Gastrocnemius medialis (tissue), 4 donors: ENCODE measurements at regions of chr3 and their contacts with region 1.

Region 1: GRCh38 chr3:179695672-179696313 is 43.0 kb downstream of the USP13 start:
- DNase-seq: no peak
- ATAC-seq: no peak
- H3K4me3 ChIP-seq: no peak overlapping the region
- H3K27ac ChIP-seq: peak overlapping the region; percentile 51 to 86 (median 70)
- H3K4me1 ChIP-seq: peaks cover 31 to 38% of the 10 kb centered on the region in 2 donors
- H3K27me3 ChIP-seq: no peaks in the 10 kb centered on the region
- CTCF ChIP-seq: no peak
- POLR2A ChIP-seq: no peak

Region 2: GRCh38 chr3:179681492-179682249 is 14.1 kb before region 1 on chr3:
- in situ Hi-C with region 1: no loop called
- intact Hi-C with region 1: loop called (anchors 2 kb)
- DNase-seq: peak in 1 of 2 donors; percentile 44
- ATAC-seq: peak; percentile 64 to 72
- H3K4me3 ChIP-seq: no peak overlapping the region
- H3K27ac ChIP-seq: peak overlapping the region; percentile 63 to 98 (median 86)
- H3K4me1 ChIP-seq: peaks cover 37 to 43% of the 10 kb centered on the region in 2 donors
- H3K27me3 ChIP-seq: no peaks in the 10 kb centered on the region
- CTCF ChIP-seq: no peak
- POLR2A ChIP-seq: no peak

Region 3: DNA sequence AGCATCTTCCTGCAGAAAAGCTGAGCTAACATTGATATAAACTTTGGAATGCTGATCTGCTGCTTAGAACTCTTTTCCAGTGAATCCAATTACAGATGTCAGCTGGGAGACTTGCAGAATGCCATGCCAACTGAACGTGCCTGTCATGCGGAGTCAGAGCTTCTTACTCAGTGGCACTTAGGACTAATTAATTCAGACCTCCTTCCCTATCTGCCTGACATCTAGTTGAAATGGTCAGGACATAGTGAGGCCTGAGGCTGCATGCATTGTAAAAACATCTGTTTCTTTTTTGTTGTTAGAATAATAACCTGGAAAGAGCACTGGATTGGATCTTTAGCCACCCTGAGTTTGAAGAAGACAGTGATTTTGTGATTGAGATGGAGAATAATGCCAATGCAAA is 69.6 kb after region 1 on chr3:
- in situ Hi-C with region 1: no loop called
- intact Hi-C with region 1: loop called (anchors 2 kb)
- DNase-seq: no peak
- ATAC-seq: no peak
- H3K4me3 ChIP-seq: no peak overlapping the region
- H3K27ac ChIP-seq: no peak overlapping the region
- H3K4me1 ChIP-seq: peaks cover 0 to 3% of the 10 kb centered on the region in 2 donors
- H3K27me3 ChIP-seq: no peaks in the 10 kb centered on the region
- CTCF ChIP-seq: no peak
- POLR2A ChIP-seq: no peak